B cell (primary cell): ENCODE measurements at regions of chr10 and their contacts with region 1.

Region 1: DNA sequence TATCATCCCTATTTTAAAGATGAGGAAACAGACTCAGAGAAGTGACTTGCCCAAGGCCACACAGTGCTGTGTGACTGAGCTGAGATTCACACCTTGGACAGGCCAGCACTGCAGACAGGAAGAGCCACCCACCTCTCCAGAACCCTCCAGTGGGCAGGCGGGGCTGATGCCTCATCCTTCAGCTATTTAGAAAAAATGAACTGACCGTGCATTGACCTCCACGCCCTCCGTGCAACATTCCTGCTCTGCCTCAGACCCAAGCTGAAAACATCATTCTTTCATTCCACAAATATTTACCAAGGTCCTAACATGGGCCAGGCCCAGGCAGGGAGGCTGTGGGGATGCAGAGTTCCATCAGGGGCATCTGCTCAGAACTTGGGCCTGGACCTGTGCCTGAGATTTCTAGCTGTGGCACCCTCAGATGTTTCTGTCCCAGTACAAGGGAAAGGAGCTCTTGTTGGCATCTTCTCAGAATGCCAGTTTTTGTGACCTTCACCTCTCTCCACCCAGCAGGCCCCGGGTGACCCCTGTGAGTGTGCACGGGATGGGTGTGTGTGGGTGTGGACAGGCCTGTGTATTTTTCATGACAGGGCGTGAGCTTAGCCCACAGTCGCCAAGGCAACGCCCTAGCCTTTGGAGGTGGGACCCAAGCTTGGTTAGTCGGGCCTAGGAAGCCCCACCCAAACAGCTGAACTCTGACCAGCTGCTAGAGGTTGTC is 6.5 kb downstream of the VSIR start:
- DNase-seq: peak; percentile 74
- ATAC-seq: peak; percentile 50
- H3K4me3 ChIP-seq: peak overlapping the region in 1 of 5 experiments; percentile 42
- H3K4me3 Mint-ChIP-seq: peak overlapping the region; percentile 84
- H3K27ac ChIP-seq: peak overlapping the region; percentile 88 to 95
- H3K27ac Mint-ChIP-seq: peak overlapping the region; percentile 99
- H3K4me1 ChIP-seq: peaks cover 54 to 93% of the 10 kb centered on the region in 2 donors
- H3K4me1 Mint-ChIP-seq: peaks cover 87% of the 10 kb centered on the region
- H3K27me3 ChIP-seq: no peaks in the 10 kb centered on the region
- H3K27me3 Mint-ChIP-seq: no peaks in the 10 kb centered on the region
- CTCF ChIP-seq: no peak

Region 2: DNA sequence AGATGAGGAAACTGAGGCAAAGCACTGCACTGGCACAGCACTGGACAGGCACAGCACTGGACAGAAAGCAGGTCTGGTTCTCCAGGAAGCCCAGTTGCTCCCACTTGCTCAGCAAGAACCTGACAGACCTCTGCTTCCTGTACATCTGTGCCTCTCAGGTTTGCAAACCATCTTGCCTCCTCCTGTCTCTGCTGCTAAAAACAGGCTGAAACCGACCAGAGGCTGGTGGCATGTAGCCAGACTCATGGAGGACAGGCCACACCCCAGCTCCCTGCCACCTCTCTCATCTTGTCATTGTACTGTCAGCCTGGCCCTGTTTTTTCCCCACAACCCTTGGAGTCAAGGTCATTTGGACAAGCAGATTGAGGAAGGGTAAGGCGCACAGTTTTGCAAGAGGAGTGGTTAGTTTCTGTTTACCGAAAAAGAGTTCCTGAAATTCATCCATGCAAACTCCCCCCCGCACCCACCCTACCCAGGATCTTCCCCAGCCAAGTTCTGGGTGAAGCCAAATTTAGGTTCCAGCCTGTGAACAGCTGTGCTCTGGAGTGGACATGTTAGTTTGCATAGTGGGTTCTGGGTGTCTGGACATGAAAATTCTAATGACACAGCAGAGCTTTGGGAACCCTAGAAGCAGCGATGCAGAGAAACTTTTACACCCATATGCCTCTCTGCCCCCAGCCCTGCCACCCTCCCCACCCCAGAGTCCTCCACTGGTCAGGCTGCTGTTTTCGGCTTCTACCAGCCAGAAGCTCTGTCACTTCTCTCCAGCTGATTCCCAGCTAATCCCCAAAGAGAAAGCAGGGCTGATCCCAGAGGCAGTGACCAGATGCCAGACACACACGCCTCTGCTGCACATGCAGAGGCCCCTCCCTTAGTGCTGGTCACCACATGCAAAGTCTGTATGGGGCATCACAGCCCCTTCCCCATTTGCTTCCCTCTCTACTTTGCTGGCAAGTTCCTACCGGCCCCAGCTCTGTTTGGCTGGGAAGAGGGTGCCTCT is 38.8 kb before region 1 on chr10:
- CTCF ChIA-PET with region 1: interaction called, 36 read pairs
- POLR2A ChIA-PET with region 1: interaction called, 15 read pairs
- intact Hi-C with region 1: loop called (anchors 1 kb)
- DNase-seq: peak; percentile 74
- ATAC-seq: peak; percentile 67
- H3K4me3 ChIP-seq: peak overlapping the region in 4 of 5 experiments; percentile 2 to 36 (median 18)
- H3K4me3 Mint-ChIP-seq: peak overlapping the region; percentile 83
- H3K27ac ChIP-seq: peak overlapping the region; percentile 75 to 78
- H3K27ac Mint-ChIP-seq: peak overlapping the region; percentile 92
- H3K4me1 ChIP-seq: peaks cover 40 to 69% of the 10 kb centered on the region in 2 donors
- H3K4me1 Mint-ChIP-seq: peaks cover 55% of the 10 kb centered on the region
- H3K27me3 ChIP-seq: no peaks in the 10 kb centered on the region
- H3K27me3 Mint-ChIP-seq: no peaks in the 10 kb centered on the region
- CTCF ChIP-seq: no peak

Region 3: GRCh38 chr10:71756311-71757191 is 10.3 kb before region 1 on chr10:
- CTCF ChIA-PET with region 1: interaction called, 15 read pairs
- POLR2A ChIA-PET with region 1: interaction called, 15 read pairs
- intact Hi-C with region 1: no loop called
- DNase-seq: no peak
- ATAC-seq: no peak
- H3K4me3 ChIP-seq: no peak overlapping the region
- H3K4me3 Mint-ChIP-seq: peak overlapping the region; percentile 41
- H3K27ac ChIP-seq: peak overlapping the region; percentile 17 to 23
- H3K27ac Mint-ChIP-seq: peak overlapping the region; percentile 83
- H3K4me1 ChIP-seq: peaks cover 61 to 66% of the 10 kb centered on the region in 2 donors
- H3K4me1 Mint-ChIP-seq: peaks cover 64% of the 10 kb centered on the region
- H3K27me3 ChIP-seq: no peaks in the 10 kb centered on the region
- H3K27me3 Mint-ChIP-seq: no peaks in the 10 kb centered on the region
- CTCF ChIP-seq: no peak

Region 4: GRCh38 chr10:72541289-72541688 is 774.4 kb after region 1 on chr10:
- CTCF ChIA-PET with region 1: no interaction called
- POLR2A ChIA-PET with region 1: no interaction called
- intact Hi-C with region 1: no loop called
- DNase-seq: no peak
- ATAC-seq: no peak
- H3K4me3 ChIP-seq: no peak overlapping the region
- H3K4me3 Mint-ChIP-seq: no peak overlapping the region
- H3K27ac ChIP-seq: no peak overlapping the region
- H3K27ac Mint-ChIP-seq: no peak overlapping the region
- H3K4me1 ChIP-seq: peaks cover 0 to 8% of the 10 kb centered on the region in 2 donors
- H3K4me1 Mint-ChIP-seq: peaks cover 17% of the 10 kb centered on the region
- H3K27me3 ChIP-seq: no peaks in the 10 kb centered on the region
- H3K27me3 Mint-ChIP-seq: no peaks in the 10 kb centered on the region
- CTCF ChIP-seq: no peak